HCT116 (cell line): ENCODE measurements at regions of chr7 and their contacts with region 1.

Region 1: GRCh38 chr7:126635545-126635944 is 617.2 kb downstream of the GRM8 start:
- DNase-seq: no peak
- ATAC-seq: no peak
- H3K4me3 ChIP-seq: no peak overlapping the region
- H3K27ac ChIP-seq: no peak overlapping the region
- H3K4me1 ChIP-seq: no peaks in the 10 kb centered on the region
- H3K27me3 ChIP-seq: no peaks in the 10 kb centered on the region
- CTCF ChIP-seq: no peak
- POLR2A ChIP-seq: no peak
- RAD21 ChIP-seq: no peak

Region 2: GRCh38 chr7:126778101-126778500 is 142.6 kb after region 1 on chr7:
- CTCF ChIA-PET with region 1: no interaction called
- POLR2A ChIA-PET with region 1: no interaction called
- RAD21 ChIA-PET with region 1: no interaction called
- intact Hi-C with region 1: loop called (anchors 5 kb)
- DNase-seq: no peak
- ATAC-seq: no peak
- H3K4me3 ChIP-seq: no peak overlapping the region
- H3K27ac ChIP-seq: no peak overlapping the region
- H3K4me1 ChIP-seq: no peaks in the 10 kb centered on the region
- H3K27me3 ChIP-seq: no peaks in the 10 kb centered on the region
- CTCF ChIP-seq: no peak
- POLR2A ChIP-seq: no peak
- RAD21 ChIP-seq: no peak